Endothelial cell of umbilical vein (primary cell): ENCODE measurements at regions of chr22 and their contacts with region 1.

Region 1: DNA sequence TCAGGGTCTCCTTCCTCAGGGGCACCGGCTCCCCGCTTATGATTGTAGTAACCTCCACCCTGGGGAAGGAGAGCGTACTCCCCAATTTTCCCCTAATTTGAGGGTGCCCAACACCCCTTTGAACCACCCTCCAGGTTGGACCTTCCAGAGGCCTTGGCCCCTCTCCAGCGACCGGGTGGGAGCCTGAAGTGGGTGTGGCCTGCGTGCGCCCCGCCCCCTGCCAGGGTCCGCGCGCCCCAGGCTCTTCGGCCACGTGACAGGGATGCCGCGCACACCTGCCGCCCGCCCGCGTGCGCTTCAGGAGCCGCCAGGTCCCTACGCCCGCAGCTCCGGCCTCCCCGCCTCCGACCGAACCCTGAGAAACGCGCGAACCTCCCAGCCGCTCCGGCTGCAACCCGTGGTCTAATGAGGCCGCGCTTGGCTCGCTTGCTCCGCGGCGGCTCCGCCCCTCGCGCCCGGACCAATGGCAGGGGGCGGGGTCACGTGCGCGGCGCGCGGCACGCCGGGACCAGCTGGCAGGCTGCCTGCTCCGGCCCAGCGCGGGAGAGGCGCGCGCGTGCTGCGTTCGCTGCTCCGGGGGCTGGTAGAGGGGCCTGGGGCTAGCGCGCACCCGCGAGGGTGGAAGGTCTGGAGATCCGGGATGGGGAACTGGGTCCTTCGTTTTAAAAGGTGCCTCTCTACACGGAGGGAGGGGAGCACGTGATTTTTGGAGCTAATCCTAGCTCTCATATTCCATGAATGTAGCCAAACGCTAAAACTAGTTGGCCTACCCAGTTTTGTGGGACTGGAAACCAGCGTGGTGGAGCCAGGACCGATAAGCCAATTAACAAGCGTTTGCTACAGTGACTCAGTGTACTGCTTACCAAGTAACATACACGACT is at the start of gene FOXRED2:
- DNase-seq: peak; percentile 82
- H3K4me3 ChIP-seq: peak within 1 kb of the TSS in 2 of 3 experiments; percentile 25 to 58
- H3K27ac ChIP-seq: peak within 1 kb of the TSS; percentile 30
- H3K4me1 ChIP-seq: peaks cover 10% of the 10 kb centered on the region
- H3K27me3 ChIP-seq: no peaks in the 10 kb centered on the region
- CTCF ChIP-seq: no peak
- POLR2A ChIP-seq: peak; percentile 83
- total RNA-seq, gene FOXRED2: 14.0 and 20.4 TPM in 2 replicates

Region 2: GRCh38 chr22:36123673-36124630 is 382.9 kb before region 1 on chr22:
- CTCF ChIA-PET with region 1: no interaction called
- POLR2A ChIA-PET with region 1: no interaction called
- dilution Hi-C with region 1: no loop called
- intact Hi-C with region 1: no loop called
- DNase-seq: peak; percentile 96
- H3K4me3 ChIP-seq: no peak overlapping the region
- H3K27ac ChIP-seq: peak overlapping the region; percentile 18
- H3K4me1 ChIP-seq: no peaks in the 10 kb centered on the region
- H3K27me3 ChIP-seq: no peaks in the 10 kb centered on the region
- CTCF ChIP-seq: peak; percentile 98 to 99
- POLR2A ChIP-seq: no peak

Region 3: GRCh38 chr22:36387752-36388518 is 118.9 kb before region 1 on chr22 and contains the start of gene MYH9:
- CTCF ChIA-PET with region 1: no interaction called
- POLR2A ChIA-PET with region 1: no interaction called
- dilution Hi-C with region 1: no loop called
- intact Hi-C with region 1: no loop called
- DNase-seq: peak; percentile 100
- H3K4me3 ChIP-seq: peak within 1 kb of the TSS; percentile 95 to 99 (median 97)
- H3K27ac ChIP-seq: peak within 1 kb of the TSS; percentile 92
- H3K4me1 ChIP-seq: peaks cover 27% of the 10 kb centered on the region
- H3K27me3 ChIP-seq: no peaks in the 10 kb centered on the region
- CTCF ChIP-seq: no peak
- POLR2A ChIP-seq: peak; percentile 98
- total RNA-seq, gene MYH9: 1,331 and 1,413 TPM in 2 replicates

Region 4: GRCh38 chr22:36520423-36520822 is 13.5 kb after region 1 on chr22:
- CTCF ChIA-PET with region 1: interaction called, 13 read pairs
- POLR2A ChIA-PET with region 1: no interaction called
- dilution Hi-C with region 1: no loop called
- intact Hi-C with region 1: no loop called
- DNase-seq: no peak
- H3K4me3 ChIP-seq: no peak overlapping the region
- H3K27ac ChIP-seq: no peak overlapping the region
- H3K4me1 ChIP-seq: no peaks in the 10 kb centered on the region
- H3K27me3 ChIP-seq: no peaks in the 10 kb centered on the region
- CTCF ChIP-seq: no peak
- POLR2A ChIP-seq: no peak

Region 5: DNA sequence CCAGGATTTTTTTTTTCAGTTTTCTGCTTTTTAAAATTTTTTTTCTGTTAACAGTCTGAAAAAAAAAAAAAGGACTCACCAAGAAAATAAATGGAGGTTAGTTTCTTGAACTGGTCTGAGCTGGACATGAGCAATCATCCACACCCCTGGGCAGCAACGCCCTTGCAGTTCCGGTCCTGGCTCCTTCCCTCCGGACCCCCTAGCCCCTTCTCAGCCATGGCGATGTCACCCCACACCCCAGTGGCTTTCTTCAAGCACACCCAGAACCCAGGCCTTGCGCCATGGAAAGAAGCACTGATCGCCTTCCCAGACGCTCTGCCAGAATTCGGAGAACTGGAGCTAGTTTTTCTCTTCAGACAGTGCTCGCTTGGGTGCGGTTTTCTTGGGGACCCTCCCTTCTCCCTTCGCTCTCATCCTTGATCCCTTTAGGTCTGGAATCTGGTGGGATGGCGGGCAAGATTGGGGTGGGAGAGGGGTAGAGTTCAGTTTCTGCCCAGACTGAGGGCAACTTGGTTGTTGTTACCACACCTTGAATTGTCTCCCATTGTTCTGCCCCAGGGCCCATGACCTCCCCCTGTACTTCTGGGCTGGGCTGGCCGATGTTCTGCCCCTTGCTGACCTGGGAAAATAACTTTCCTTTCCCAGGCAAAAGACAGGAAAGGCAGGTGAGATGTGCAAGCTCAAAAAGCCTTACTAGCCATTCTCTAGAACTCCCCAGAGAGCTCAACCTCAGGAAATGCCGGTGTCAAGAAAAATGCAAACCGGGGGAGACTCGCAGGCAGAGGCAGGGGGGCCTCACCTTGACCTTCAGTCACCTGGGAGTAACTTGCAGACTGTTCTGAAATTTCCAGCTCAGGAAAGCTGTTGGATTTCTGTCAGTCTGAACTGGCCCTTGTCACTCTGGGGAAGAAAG is 54.3 kb after region 1 on chr22:
- CTCF ChIA-PET with region 1: no interaction called
- POLR2A ChIA-PET with region 1: no interaction called
- dilution Hi-C with region 1: no loop called
- intact Hi-C with region 1: no loop called
- DNase-seq: no peak
- H3K4me3 ChIP-seq: no peak overlapping the region
- H3K27ac ChIP-seq: no peak overlapping the region
- H3K4me1 ChIP-seq: peaks cover 9% of the 10 kb centered on the region
- H3K27me3 ChIP-seq: peaks cover 3 to 6% of the 10 kb centered on the region in 2 experiments
- CTCF ChIP-seq: no peak
- POLR2A ChIP-seq: no peak